PC-9 (cell line): ENCODE measurements at regions of chr7 and their contacts with region 1.

Region 1: DNA sequence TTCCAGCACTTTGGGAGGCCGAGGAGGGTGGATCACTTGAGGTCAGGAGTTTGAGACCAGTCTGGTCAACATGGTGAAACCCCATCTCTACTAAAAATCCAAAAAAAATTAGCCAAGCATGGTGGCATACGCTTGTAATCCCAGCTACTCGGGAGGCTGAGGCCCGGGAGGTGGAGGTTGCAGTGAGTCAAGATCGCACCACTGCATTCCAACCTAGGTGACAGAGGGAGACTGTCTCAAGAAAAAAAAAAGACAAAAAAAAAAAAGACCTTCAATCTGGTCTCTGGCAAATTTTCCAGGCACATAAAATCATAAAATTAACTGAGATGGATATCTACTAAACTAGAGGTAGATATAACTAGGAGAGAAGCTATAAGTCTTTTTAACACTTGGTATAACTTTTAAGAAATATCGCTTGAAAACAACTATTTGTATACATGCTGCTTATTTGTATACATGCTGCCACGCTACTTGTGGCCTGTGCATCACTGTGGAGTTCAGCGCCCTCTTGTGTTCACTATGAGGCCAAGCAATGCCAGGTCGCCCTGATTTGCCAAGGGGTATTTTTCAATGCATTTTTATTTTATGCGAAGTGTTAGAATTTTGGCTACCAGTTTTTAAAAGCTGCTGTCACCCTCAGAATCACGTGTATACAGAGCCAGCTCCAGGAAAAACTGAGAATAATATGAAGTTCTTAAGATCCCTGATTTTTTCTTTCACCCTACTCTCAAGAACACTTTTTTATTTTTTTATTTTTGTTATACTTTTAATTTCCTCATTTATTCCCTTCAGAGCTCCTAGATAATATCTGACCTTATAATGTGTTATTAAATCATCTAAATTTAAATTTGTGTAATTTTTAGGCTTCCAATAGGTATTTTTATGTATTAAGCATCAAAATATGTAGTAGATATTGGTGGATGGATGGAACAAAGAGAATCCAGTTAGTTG is 26.7 kb downstream of the CYCS start:
- DNase-seq: peak; percentile 64 to 76
- H3K4me3 ChIP-seq: peak overlapping the region; percentile 18; the same call in 1 of the 2 replicates
- H3K27ac ChIP-seq: no peak overlapping the region
- H3K4me1 ChIP-seq: peaks cover 11% of the 10 kb centered on the region; the same call in 1 of the 2 replicates
- H3K27me3 ChIP-seq: no peaks in the 10 kb centered on the region
- CTCF ChIP-seq: peak; percentile 99

Region 2: GRCh38 chr7:23696916-23697441 is 1401.4 kb before region 1 on chr7:
- CTCF ChIA-PET with region 1: no interaction called
- POLR2A ChIA-PET with region 1: no interaction called
- intact Hi-C with region 1: loop called (anchors 5 kb)
- DNase-seq: peak; percentile 50 to 69
- H3K4me3 ChIP-seq: no peak overlapping the region
- H3K27ac ChIP-seq: no peak overlapping the region
- H3K4me1 ChIP-seq: peaks cover under 1% of the 10 kb centered on the region; the same call in 1 of the 2 replicates
- H3K27me3 ChIP-seq: no peaks in the 10 kb centered on the region
- CTCF ChIP-seq: peak; percentile 93

Region 3: GRCh38 chr7:24290004-24290641 is 808.2 kb before region 1 on chr7:
- CTCF ChIA-PET with region 1: no interaction called
- POLR2A ChIA-PET with region 1: no interaction called
- intact Hi-C with region 1: loop called (anchors 2 kb)
- DNase-seq: peak; percentile 20 to 81
- H3K4me3 ChIP-seq: no peak overlapping the region
- H3K27ac ChIP-seq: no peak overlapping the region
- H3K4me1 ChIP-seq: peaks cover 26% of the 10 kb centered on the region
- H3K27me3 ChIP-seq: no peaks in the 10 kb centered on the region
- CTCF ChIP-seq: peak; percentile 82

Region 4: DNA sequence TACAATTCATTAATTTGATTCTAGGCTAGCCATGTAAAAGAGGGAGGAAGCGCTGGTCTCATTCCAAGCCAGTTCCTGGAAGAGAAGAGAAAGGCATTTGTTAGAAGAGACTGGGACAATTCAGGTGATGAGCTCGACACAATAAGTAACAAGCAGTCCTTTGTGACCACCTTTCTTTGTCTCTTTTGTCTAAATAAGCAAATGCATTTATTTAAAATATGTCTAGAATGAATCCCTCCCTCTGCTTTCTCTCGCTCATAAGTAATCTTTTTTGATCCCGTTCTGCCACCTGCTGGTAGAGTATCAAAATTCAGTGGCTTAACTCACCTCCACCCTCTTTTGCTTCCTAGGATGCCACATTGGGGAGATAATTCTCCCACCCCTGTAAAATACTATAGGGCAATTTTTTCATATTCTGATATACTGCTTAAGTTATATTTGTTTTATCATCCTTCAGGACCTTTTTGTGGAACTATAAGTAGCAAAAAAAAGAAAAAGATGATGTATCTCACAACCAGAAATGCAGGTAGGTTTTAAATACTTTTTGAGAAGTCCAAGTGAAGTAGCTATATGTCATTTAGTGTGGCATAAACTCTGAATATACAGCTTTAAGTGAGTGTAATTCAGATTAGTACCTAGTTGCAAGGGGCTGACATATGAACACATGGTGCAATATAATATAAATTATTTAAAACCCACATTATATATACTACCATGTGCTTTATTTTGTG is 432.6 kb before region 1 on chr7:
- CTCF ChIA-PET with region 1: interaction called, 5 read pairs
- POLR2A ChIA-PET with region 1: no interaction called
- intact Hi-C with region 1: loop called (anchors 1 kb)
- DNase-seq: peak; percentile 39 to 48
- H3K4me3 ChIP-seq: no peak overlapping the region
- H3K27ac ChIP-seq: no peak overlapping the region
- H3K4me1 ChIP-seq: peaks cover 21% of the 10 kb centered on the region
- H3K27me3 ChIP-seq: no peaks in the 10 kb centered on the region
- CTCF ChIP-seq: peak; percentile 97

Region 5: DNA sequence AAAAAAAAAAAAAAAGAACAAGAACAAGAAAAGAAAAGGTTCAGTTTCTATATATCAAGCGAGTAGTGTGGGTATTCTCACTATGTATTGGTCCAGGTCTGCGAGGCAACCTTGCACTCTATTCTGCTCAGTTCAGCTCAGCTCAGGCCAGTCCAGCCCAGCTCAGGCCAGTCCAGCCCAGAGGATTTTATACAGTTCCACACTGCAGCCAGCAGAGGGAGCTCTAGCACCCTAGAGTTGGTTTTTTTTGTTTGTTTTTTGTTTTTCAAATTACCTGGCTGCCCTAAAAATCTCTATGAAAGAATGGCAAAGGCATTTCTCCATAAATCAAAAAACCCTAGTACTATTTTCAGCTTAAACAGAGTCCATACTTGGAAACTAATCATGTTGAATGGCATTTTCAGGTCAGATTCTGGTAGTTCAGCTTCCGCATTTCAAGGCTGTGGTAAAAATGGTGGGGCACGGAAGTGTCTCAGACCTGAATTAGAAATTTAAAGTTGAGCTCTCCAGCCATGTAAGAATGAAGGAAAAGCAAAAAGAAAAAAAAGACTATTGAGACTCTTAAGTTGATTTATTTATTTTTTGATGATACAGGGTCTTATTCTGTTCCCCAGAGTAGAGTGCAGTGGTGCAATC is 285.9 kb before region 1 on chr7:
- CTCF ChIA-PET with region 1: interaction called, 55 read pairs
- POLR2A ChIA-PET with region 1: no interaction called
- intact Hi-C with region 1: loop called (anchors 1 kb)
- DNase-seq: peak in 1 of 2 experiments; percentile 61
- H3K4me3 ChIP-seq: no peak overlapping the region
- H3K27ac ChIP-seq: no peak overlapping the region
- H3K4me1 ChIP-seq: no peaks in the 10 kb centered on the region
- H3K27me3 ChIP-seq: no peaks in the 10 kb centered on the region
- CTCF ChIP-seq: peak; percentile 99